Heart left ventricle (tissue), 16 donors: ENCODE measurements at regions of chr1 and their contacts with region 1.

Region 1: GRCh38 chr1:23889074-23889473 is 21.0 kb upstream of the FUCA1 start:
- DNase-seq: no peak
- ATAC-seq: no peak
- H3K4me3 ChIP-seq: no peak overlapping the region
- H3K27ac ChIP-seq: no peak overlapping the region
- H3K4me1 ChIP-seq: peaks cover 0 to 11% (median 0%) of the 10 kb centered on the region in 12 donors
- H3K27me3 ChIP-seq: no peaks in the 10 kb centered on the region
- CTCF ChIP-seq: no peak
- POLR2A ChIP-seq: no peak

Region 2: GRCh38 chr1:23908493-23909341 is 19.6 kb after region 1 on chr1:
- intact Hi-C with region 1: loop called in 1 of 10 experiments (anchors 2 kb)
- DNase-seq: peak in 3 of 5 donors; percentile 7 to 39 (median 29)
- ATAC-seq: peak in 2 of 4 donors; percentile 62 to 63
- H3K4me3 ChIP-seq: no peak overlapping the region
- H3K27ac ChIP-seq: no peak overlapping the region
- H3K4me1 ChIP-seq: peaks cover 0 to 49% (median 0%) of the 10 kb centered on the region in 12 donors
- H3K27me3 ChIP-seq: peaks cover 0 to 58% (median 13%) of the 10 kb centered on the region in 9 donors
- CTCF ChIP-seq: no peak
- POLR2A ChIP-seq: no peak